Activated CD8-positive, alpha-beta T cell treated with anti-CD3 and anti-CD28 coated beads, Interleukin-2, amount 10 ng/mL, durations not matched to agents 7 days and 5 days (primary cell): ENCODE measurements at regions of chr5 and their contacts with region 1.

Region 1: GRCh38 chr5:151659001-151659754 is 27.5 kb downstream of the SPARC start:
- DNase-seq: peak; percentile 85
- ATAC-seq: peak; percentile 98
- H3K4me3 Mint-ChIP-seq: no peak overlapping the region
- H3K27ac Mint-ChIP-seq: no peak overlapping the region
- H3K4me1 Mint-ChIP-seq: peaks cover 9% of the 10 kb centered on the region
- H3K27me3 Mint-ChIP-seq: peaks cover 22% of the 10 kb centered on the region

Region 2: GRCh38 chr5:151384106-151384505 is 275.1 kb before region 1 on chr5:
- CTCF ChIA-PET with region 1: no interaction called
- POLR2A ChIA-PET with region 1: no interaction called
- DNase-seq: no peak
- ATAC-seq: no peak
- H3K4me3 Mint-ChIP-seq: no peak overlapping the region
- H3K27ac Mint-ChIP-seq: no peak overlapping the region
- H3K4me1 Mint-ChIP-seq: no peaks in the 10 kb centered on the region
- H3K27me3 Mint-ChIP-seq: peaks cover 18% of the 10 kb centered on the region

Region 3: GRCh38 chr5:151447174-151448037 is 211.8 kb before region 1 on chr5 and contains the start of gene SLC36A1:
- CTCF ChIA-PET with region 1: interaction called, 21 read pairs
- POLR2A ChIA-PET with region 1: no interaction called
- DNase-seq: peak; percentile 95
- ATAC-seq: peak; percentile 94
- H3K4me3 Mint-ChIP-seq: peak within 1 kb of the TSS; percentile 94
- H3K27ac Mint-ChIP-seq: peak within 1 kb of the TSS; percentile 90
- H3K4me1 Mint-ChIP-seq: peaks cover 20% of the 10 kb centered on the region
- H3K27me3 Mint-ChIP-seq: peaks cover 29% of the 10 kb centered on the region
- total RNA-seq, gene SLC36A1: 6.6 to 7.7 TPM

Region 4: DNA sequence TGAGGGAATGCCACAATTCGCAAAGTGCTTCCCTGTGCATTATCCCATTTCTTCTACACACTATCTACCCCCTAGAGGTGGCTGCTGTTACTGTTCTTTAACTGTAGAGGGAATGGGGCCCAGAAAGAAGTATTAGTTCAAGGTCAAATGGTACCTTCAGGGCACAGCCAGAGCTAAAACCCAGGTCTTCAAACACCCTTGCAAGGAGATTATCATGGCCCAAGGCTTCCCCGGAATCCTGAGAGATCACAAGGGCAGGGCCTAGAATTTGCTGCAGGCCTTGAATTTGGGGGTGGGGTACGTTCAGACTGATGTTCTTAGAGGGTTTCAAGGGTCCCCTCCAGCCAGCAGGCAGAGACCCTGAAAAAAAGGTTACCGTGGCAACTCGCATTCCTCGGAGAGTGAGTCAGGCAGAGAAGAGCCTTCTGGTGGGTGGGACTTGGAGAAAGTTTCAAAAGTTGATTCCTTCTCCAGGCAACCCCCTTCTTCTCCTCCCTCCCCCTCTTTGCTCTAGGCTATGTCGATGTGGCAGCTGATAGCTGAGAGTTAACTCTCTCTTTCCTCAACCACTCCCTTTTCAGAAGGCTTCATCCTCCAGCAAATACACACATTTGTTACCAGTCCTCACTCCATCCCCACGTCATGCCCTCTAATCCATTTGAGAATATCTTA is 25.6 kb after region 1 on chr5:
- CTCF ChIA-PET with region 1: interaction called, 10 read pairs
- POLR2A ChIA-PET with region 1: no interaction called
- DNase-seq: no peak
- ATAC-seq: no peak
- H3K4me3 Mint-ChIP-seq: no peak overlapping the region
- H3K27ac Mint-ChIP-seq: no peak overlapping the region
- H3K4me1 Mint-ChIP-seq: peaks cover 8% of the 10 kb centered on the region
- H3K27me3 Mint-ChIP-seq: peaks cover 35% of the 10 kb centered on the region

Region 5: GRCh38 chr5:151740336-151740942 is 81.3 kb after region 1 on chr5:
- CTCF ChIA-PET with region 1: interaction called, 127 read pairs
- POLR2A ChIA-PET with region 1: interaction called, 6 read pairs
- DNase-seq: peak; percentile 66
- ATAC-seq: peak; percentile 75
- H3K4me3 Mint-ChIP-seq: no peak overlapping the region
- H3K27ac Mint-ChIP-seq: no peak overlapping the region
- H3K4me1 Mint-ChIP-seq: peaks cover 18% of the 10 kb centered on the region
- H3K27me3 Mint-ChIP-seq: no peaks in the 10 kb centered on the region

Region 6: DNA sequence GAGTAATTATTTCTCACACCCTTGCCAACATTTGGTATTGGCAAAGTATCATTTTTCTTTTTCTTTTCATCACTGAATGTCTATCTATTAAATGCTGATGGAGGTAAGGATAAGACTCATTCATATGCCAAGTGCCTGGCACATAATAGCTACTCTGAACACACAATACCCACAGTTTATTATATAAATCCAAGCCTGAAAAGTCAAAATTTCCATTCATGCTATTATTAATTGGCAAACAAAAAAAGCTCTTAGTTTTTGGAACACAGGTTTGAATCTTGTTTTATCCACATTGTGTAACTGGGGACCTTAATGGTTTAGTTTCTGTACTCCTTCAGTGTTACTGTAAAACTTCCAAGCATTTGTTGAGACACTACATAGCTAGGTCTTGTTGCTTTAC is 105.6 kb after region 1 on chr5:
- CTCF ChIA-PET with region 1: interaction called, 41 read pairs
- POLR2A ChIA-PET with region 1: no interaction called
- DNase-seq: no peak
- ATAC-seq: no peak
- H3K4me3 Mint-ChIP-seq: no peak overlapping the region
- H3K27ac Mint-ChIP-seq: no peak overlapping the region
- H3K4me1 Mint-ChIP-seq: peaks cover 2% of the 10 kb centered on the region
- H3K27me3 Mint-ChIP-seq: no peaks in the 10 kb centered on the region